ENCODE measurements at regions of chr19 and their contacts with region 1.

Region 1: GRCh38 chr19:19489804-19490655 is 25.3 kb downstream of the TSSK6 start:
- DNase-seq: peak; percentile 69
- H3K4me3 ChIP-seq: peak overlapping the region; percentile 46
- H3K27ac ChIP-seq: peak overlapping the region; percentile 80
- H3K4me1 ChIP-seq: peaks cover 56% of the 10 kb centered on the region
- H3K27me3 ChIP-seq: no peaks in the 10 kb centered on the region
- CTCF ChIP-seq: peak; percentile 90

Region 2: DNA sequence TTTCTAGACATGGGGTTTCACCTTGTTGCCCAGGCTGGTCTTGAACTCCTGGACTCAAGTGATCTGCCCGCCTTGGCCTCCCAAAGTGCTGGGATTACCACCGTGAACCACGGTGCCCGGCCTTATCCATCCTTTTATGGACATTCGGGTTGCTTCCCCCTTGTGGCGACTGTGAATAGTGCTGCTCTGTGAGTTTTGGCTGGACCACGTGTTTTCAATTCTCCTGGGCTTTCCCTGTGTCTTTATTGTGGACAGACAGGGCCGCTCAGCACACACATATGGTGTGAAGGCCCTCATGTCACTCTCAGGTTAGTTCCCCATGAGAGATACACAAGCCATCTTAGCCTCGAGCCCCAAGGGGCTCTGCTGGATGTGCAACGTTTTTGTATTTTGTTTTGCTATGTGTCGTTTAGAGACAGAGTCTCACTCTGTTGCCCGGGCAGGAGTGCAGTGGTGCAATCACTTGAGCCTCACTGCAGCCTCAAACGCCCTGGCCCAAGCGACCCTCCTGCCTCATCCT is 128.9 kb before region 1 on chr19:
- intact Hi-C with region 1: loop called (anchors 5 kb)
- DNase-seq: peak; percentile 78
- H3K4me3 ChIP-seq: no peak overlapping the region
- H3K27ac ChIP-seq: peak overlapping the region; percentile 44
- H3K4me1 ChIP-seq: peaks cover 24% of the 10 kb centered on the region
- H3K27me3 ChIP-seq: no peaks in the 10 kb centered on the region
- CTCF ChIP-seq: peak; percentile 90